WTC11 (cell line): ENCODE measurements at regions of chr3 and their contacts with region 1.

Region 1: GRCh38 chr3:119240591-119241434 is at the start of gene B4GALT4:
- DNase-seq: peak; percentile 90
- ATAC-seq: peak; percentile 94
- H3K4me3 Mint-ChIP-seq: peak within 1 kb of the TSS; percentile 85
- H3K27ac Mint-ChIP-seq: peak within 1 kb of the TSS; percentile 91
- H3K4me1 Mint-ChIP-seq: peaks cover 13% of the 10 kb centered on the region
- H3K27me3 Mint-ChIP-seq: no peaks in the 10 kb centered on the region
- CTCF ChIP-seq: no peak
- total RNA-seq, gene B4GALT4: 32.0 to 37.7 TPM (median 32.9 TPM) in 3 replicates

Region 2: GRCh38 chr3:118884748-118885206 is 356.0 kb before region 1 on chr3:
- CTCF ChIA-PET with region 1: interaction called, 18 read pairs
- POLR2A ChIA-PET with region 1: no interaction called
- DNase-seq: peak; percentile 73
- ATAC-seq: peak; percentile 78
- H3K4me3 Mint-ChIP-seq: no peak overlapping the region
- H3K27ac Mint-ChIP-seq: no peak overlapping the region
- H3K4me1 Mint-ChIP-seq: 0 out of 2 replicates have a peak, but pooled peaks cover 2% of the 10 kb centered on the region
- H3K27me3 Mint-ChIP-seq: no peaks in the 10 kb centered on the region
- CTCF ChIP-seq: peak; percentile 82

Region 3: GRCh38 chr3:119145500-119146191 is 95.2 kb before region 1 on chr3 and contains the start of gene TEX55:
- CTCF ChIA-PET with region 1: interaction called, 18 read pairs
- POLR2A ChIA-PET with region 1: no interaction called
- DNase-seq: no peak
- ATAC-seq: peak; percentile 94
- H3K4me3 Mint-ChIP-seq: no peak within 1 kb of the TSS
- H3K27ac Mint-ChIP-seq: no peak within 1 kb of the TSS
- H3K4me1 Mint-ChIP-seq: no peaks in the 10 kb centered on the region
- H3K27me3 Mint-ChIP-seq: peaks cover 2% of the 10 kb centered on the region; the same call in 1 of the 2 replicates
- CTCF ChIP-seq: no peak
- total RNA-seq, gene TEX55: not detected in 3 replicates

Region 4: GRCh38 chr3:119257682-119258410 is 17.0 kb after region 1 on chr3:
- CTCF ChIA-PET with region 1: interaction called, 12 read pairs
- POLR2A ChIA-PET with region 1: no interaction called
- DNase-seq: no peak
- ATAC-seq: no peak
- H3K4me3 Mint-ChIP-seq: no peak overlapping the region
- H3K27ac Mint-ChIP-seq: peak overlapping the region; percentile 75
- H3K4me1 Mint-ChIP-seq: peaks cover 62% of the 10 kb centered on the region
- H3K27me3 Mint-ChIP-seq: no peaks in the 10 kb centered on the region
- CTCF ChIP-seq: no peak

Region 5: DNA sequence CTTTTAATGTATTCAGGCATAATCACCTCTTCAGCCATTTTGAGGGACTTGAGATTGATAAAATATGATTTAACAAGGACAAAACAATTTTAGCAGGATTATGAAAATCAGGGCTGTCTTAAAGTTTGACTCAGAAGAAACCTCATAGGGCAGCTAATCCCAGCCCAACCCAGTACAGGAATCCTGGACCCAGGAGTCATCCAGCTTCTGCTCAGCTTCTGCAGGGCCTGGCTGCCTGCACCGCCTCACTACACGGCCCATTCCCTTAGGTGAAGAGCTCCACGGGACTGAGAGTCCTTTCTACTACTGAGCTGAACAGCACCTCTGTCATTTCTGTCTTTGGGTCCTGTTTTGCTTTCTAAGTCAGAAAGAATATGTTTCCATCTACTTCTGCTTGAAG is 90.8 kb after region 1 on chr3:
- CTCF ChIA-PET with region 1: no interaction called
- POLR2A ChIA-PET with region 1: no interaction called
- DNase-seq: no peak
- ATAC-seq: no peak
- H3K4me3 Mint-ChIP-seq: no peak overlapping the region
- H3K27ac Mint-ChIP-seq: no peak overlapping the region
- H3K4me1 Mint-ChIP-seq: peaks cover 29% of the 10 kb centered on the region
- H3K27me3 Mint-ChIP-seq: no peaks in the 10 kb centered on the region
- CTCF ChIP-seq: no peak

Region 6: GRCh38 chr3:119352849-119353502 is 112.2 kb after region 1 on chr3:
- CTCF ChIA-PET with region 1: interaction called, 28 read pairs
- POLR2A ChIA-PET with region 1: interaction called, 6 read pairs
- DNase-seq: no peak
- ATAC-seq: peak; percentile 10
- H3K4me3 Mint-ChIP-seq: no peak overlapping the region
- H3K27ac Mint-ChIP-seq: 0 out of 2 replicates have a peak overlapping the region, but pooled peaks have one; percentile 48
- H3K4me1 Mint-ChIP-seq: peaks cover 66% of the 10 kb centered on the region
- H3K27me3 Mint-ChIP-seq: no peaks in the 10 kb centered on the region
- CTCF ChIP-seq: no peak

Region 7: DNA sequence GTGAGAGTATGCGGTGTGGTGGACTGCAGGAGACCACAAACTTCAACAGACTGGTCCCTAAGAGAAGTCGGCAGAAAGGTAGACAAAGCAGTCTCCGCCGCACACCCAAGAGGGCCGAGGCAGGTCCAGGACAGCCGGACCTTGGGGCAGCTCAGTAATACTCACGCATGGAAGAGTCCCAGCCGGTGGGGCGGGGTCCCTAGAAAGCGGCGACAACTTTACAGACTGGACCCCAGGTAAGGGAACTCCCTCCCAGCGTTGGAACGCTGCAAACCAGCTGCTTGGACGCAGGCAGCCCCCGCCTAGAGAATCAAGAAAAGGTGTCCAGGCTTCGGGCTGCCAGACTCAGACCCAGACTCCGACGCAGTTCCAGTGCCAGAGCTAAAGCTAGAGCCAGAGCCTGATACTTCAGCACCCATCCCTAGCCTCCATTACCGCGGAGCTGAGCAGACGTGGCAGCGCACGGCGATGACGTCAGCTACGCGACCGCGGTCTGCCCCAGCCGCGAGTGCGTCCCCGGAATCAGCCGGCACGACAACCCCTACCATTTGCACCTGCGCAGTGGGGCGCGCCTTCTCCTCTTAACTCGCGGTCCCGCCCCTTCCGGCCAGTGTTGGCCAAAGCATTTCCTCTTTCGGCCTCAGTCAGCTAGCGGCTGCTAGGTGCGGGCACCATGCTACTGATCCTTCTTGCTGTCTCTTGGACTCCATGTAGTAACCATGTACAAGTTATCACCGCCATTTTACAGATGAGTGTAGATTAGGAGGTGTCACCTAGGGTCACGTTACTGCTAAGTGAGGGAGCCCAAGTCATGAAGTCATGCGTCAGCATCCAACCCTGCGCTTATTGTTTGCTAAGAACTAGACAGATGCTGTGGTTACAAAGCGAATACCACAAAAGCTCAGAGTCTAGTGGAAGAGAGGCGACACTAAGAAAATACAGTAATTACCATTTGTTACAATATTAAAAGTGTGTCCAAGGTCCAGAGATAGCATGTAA is 222.7 kb after region 1 on chr3 and contains the start of gene TMEM39A:
- CTCF ChIA-PET with region 1: interaction called, 10 read pairs
- POLR2A ChIA-PET with region 1: no interaction called
- DNase-seq: peak; percentile 99
- ATAC-seq: peak; percentile 97
- H3K4me3 Mint-ChIP-seq: peak within 1 kb of the TSS; percentile 100
- H3K27ac Mint-ChIP-seq: peak within 1 kb of the TSS; percentile 97
- H3K4me1 Mint-ChIP-seq: peaks cover 20% of the 10 kb centered on the region
- H3K27me3 Mint-ChIP-seq: no peaks in the 10 kb centered on the region
- CTCF ChIP-seq: no peak
- total RNA-seq, gene TMEM39A: 44.5 to 48.9 TPM (median 46.7 TPM) in 3 replicates